PC-9 (cell line): ENCODE measurements at regions of chr7 and their contacts with region 1.

Region 1: GRCh38 chr7:6198689-6199595 is 73.5 kb downstream of the CYTH3 start:
- DNase-seq: no peak
- H3K4me3 ChIP-seq: no peak overlapping the region
- H3K27ac ChIP-seq: no peak overlapping the region
- H3K4me1 ChIP-seq: no peaks in the 10 kb centered on the region
- H3K27me3 ChIP-seq: no peaks in the 10 kb centered on the region
- CTCF ChIP-seq: no peak

Region 2: GRCh38 chr7:6139189-6139996 is 59.5 kb before region 1 on chr7:
- CTCF ChIA-PET with region 1: no interaction called
- POLR2A ChIA-PET with region 1: interaction called, 14 read pairs
- intact Hi-C with region 1: no loop called
- DNase-seq: no peak
- H3K4me3 ChIP-seq: no peak overlapping the region
- H3K27ac ChIP-seq: no peak overlapping the region
- H3K4me1 ChIP-seq: no peaks in the 10 kb centered on the region
- H3K27me3 ChIP-seq: no peaks in the 10 kb centered on the region
- CTCF ChIP-seq: no peak

Region 3: GRCh38 chr7:7830122-7830878 is 1631.4 kb after region 1 on chr7:
- CTCF ChIA-PET with region 1: no interaction called
- POLR2A ChIA-PET with region 1: interaction called, 24 read pairs
- intact Hi-C with region 1: no loop called
- DNase-seq: no peak
- H3K4me3 ChIP-seq: no peak overlapping the region
- H3K27ac ChIP-seq: 0 out of 2 replicates have a peak overlapping the region, but pooled peaks have one; percentile 8
- H3K4me1 ChIP-seq: peaks cover 15% of the 10 kb centered on the region
- H3K27me3 ChIP-seq: no peaks in the 10 kb centered on the region
- CTCF ChIP-seq: no peak